BJ (cell line): ENCODE measurements at regions of chr10 and their contacts with region 1.

Region 1: GRCh38 chr10:95374597-95375209 is 83.9 kb upstream of the PDLIM1 start:
- DNase-seq: no peak
- H3K4me3 ChIP-seq: no peak overlapping the region
- H3K27me3 ChIP-seq: peaks cover 5% of the 10 kb centered on the region
- CTCF ChIP-seq: peak; percentile 85

Region 2: DNA sequence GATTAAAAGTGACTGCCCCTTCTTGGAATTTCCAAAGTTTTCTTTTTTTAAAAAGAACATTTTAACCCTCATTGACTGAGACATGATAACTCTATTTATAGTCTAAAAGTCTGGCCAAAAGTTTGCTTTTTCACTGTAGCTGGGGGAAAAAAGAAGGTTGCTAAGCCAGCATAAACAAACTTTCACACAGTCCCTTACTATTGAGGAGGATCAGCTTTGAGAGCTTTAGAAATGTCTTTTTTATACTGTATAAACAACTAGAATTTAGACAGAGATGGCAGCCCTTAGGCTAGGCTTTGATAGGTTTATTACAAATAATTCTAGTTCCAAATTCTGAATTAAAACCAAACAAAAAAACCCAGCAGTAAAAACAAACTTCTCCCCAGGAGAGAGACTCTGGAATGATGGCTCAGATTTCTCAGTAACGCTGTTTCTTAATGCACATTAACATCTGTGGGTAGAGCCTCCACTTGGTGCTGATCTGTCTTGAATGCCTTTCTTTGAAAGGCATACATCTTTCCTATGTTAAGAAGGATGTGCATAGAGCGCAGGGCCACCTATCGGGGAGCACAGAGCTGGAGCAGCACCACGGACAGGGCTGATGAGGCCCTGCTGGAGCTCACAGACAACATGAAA is 17.0 kb after region 1 on chr10:
- CTCF ChIA-PET with region 1: interaction called, 13 read pairs
- POLR2A ChIA-PET with region 1: no interaction called
- DNase-seq: no peak
- H3K4me3 ChIP-seq: no peak overlapping the region
- H3K27me3 ChIP-seq: no peaks in the 10 kb centered on the region
- CTCF ChIP-seq: peak; percentile 33

Region 3: DNA sequence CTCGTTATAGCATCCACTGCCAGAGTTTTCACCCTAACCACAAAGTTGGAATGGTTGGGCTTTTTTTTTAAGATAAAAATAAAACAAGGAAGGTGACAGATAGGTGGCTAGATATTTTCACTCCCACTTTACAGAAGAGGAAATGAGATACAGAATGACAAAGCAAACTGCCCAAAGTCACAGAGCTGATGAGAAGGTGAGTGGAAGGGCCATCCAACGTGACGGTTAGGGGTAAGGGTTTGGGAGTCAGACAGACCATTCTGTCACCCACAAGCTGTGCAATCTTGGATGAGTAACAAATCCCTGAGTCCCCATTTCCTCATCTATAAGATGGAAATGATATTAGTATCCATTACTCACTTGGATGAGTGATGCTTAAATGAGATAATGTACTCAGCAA is 23.0 kb after region 1 on chr10:
- CTCF ChIA-PET with region 1: interaction called, 11 read pairs
- POLR2A ChIA-PET with region 1: no interaction called
- DNase-seq: no peak
- H3K4me3 ChIP-seq: no peak overlapping the region
- H3K27me3 ChIP-seq: no peaks in the 10 kb centered on the region
- CTCF ChIP-seq: no peak

Region 4: GRCh38 chr10:95408983-95409873 is 34.5 kb after region 1 on chr10:
- CTCF ChIA-PET with region 1: no interaction called
- POLR2A ChIA-PET with region 1: no interaction called
- DNase-seq: no peak
- H3K4me3 ChIP-seq: no peak overlapping the region
- H3K27me3 ChIP-seq: no peaks in the 10 kb centered on the region
- CTCF ChIP-seq: no peak